ENCODE measurements at regions of chr13 and their contacts with region 1.

Region 1: GRCh38 chr13:48580185-48580803 is 47.4 kb upstream of the RCBTB2 start:
- DNase-seq: peak; percentile 85
- ATAC-seq: peak; percentile 67
- H3K4me3 Mint-ChIP-seq: no peak overlapping the region
- H3K27ac Mint-ChIP-seq: no peak overlapping the region
- H3K4me1 Mint-ChIP-seq: peaks cover 3% of the 10 kb centered on the region
- H3K27me3 Mint-ChIP-seq: peaks cover 25% of the 10 kb centered on the region
- CTCF ChIP-seq: peak; percentile 90

Region 2: GRCh38 chr13:48334534-48335127 is 245.7 kb before region 1 on chr13:
- CTCF ChIA-PET with region 1: interaction called, 173 read pairs
- POLR2A ChIA-PET with region 1: no interaction called
- intact Hi-C with region 1: loop called (anchors 2 kb)
- DNase-seq: no peak
- ATAC-seq: peak; percentile 58
- H3K4me3 Mint-ChIP-seq: no peak overlapping the region
- H3K27ac Mint-ChIP-seq: no peak overlapping the region
- H3K4me1 Mint-ChIP-seq: peaks cover 11% of the 10 kb centered on the region
- H3K27me3 Mint-ChIP-seq: no peaks in the 10 kb centered on the region
- CTCF ChIP-seq: peak; percentile 87

Region 3: DNA sequence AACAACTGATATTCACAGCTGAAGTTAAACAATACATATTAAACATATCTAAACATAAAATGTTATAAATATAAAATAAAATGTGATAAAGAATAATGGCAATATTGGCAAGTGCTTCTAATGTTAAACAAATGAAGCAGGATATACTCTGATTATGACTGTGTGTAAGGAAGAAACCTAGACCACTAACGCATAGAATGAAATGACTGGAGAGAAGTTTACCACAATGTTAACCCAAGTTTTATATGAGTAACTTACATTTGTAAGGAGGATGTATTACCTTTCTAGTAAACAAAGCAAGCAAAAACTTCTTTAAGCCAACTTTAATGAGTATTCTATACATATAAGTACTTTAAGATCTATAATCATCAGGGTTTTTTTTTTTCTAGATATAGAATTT is 233.7 kb before region 1 on chr13:
- CTCF ChIA-PET with region 1: interaction called, 10 read pairs
- POLR2A ChIA-PET with region 1: no interaction called
- intact Hi-C with region 1: no loop called
- DNase-seq: no peak
- ATAC-seq: peak; percentile 13
- H3K4me3 Mint-ChIP-seq: no peak overlapping the region
- H3K27ac Mint-ChIP-seq: no peak overlapping the region
- H3K4me1 Mint-ChIP-seq: peaks cover 2% of the 10 kb centered on the region
- H3K27me3 Mint-ChIP-seq: no peaks in the 10 kb centered on the region
- CTCF ChIP-seq: no peak

Measured in activated CD8-positive, alpha-beta T cell treated with anti-CD3 and anti-CD28 coated beads for 36 hours (primary cell).